ENCODE measurements at regions of chr20 and their contacts with region 1.

Region 1: GRCh38 chr20:8722276-8722928 is 346.5 kb upstream of the PLCB4 start:
- DNase-seq: peak; percentile 83
- H3K4me3 ChIP-seq: no peak overlapping the region
- H3K27ac ChIP-seq: no peak overlapping the region
- H3K4me1 ChIP-seq: no peaks in the 10 kb centered on the region
- H3K27me3 ChIP-seq: no peaks in the 10 kb centered on the region
- CTCF ChIP-seq: peak; percentile 62
- POLR2A ChIP-seq: no peak

Region 2: DNA sequence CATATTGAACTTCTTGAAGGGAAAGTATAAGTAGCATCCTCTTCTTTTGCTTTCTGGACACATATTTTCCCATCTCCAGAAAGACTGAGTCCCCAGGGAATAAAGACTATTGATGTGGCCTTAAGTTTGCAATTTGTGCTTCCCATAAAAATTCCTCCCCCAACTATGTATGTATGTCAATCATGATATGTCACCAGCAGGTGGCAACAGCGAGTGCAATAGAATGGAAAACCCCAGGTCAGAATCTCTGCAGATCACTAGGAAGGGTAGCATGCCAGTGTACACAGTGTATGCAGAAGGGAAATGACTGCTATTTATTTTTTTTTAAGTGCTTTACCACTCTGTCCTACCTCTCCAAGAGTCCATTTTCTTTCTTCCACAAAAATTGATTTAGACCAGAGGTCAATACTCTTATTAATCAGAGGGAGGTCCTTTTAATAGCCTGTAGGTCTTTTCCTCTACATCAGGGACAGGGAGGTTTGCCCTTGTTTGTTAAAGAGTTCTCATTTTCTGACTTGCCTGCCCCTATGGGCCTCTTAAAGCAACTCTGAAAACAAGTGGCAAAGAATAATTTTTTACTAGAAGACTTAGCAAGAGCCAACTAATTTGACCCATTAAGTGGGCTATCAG is 1893.5 kb before region 1 on chr20:
- CTCF ChIA-PET with region 1: no interaction called
- POLR2A ChIA-PET with region 1: no interaction called
- dilution Hi-C with region 1: no loop called
- intact Hi-C with region 1: loop called (anchors 10 kb)
- DNase-seq: peak; percentile 85
- H3K4me3 ChIP-seq: no peak overlapping the region
- H3K27ac ChIP-seq: no peak overlapping the region
- H3K4me1 ChIP-seq: no peaks in the 10 kb centered on the region
- H3K27me3 ChIP-seq: no peaks in the 10 kb centered on the region
- CTCF ChIP-seq: peak; percentile 56 to 59
- POLR2A ChIP-seq: no peak

Region 3: DNA sequence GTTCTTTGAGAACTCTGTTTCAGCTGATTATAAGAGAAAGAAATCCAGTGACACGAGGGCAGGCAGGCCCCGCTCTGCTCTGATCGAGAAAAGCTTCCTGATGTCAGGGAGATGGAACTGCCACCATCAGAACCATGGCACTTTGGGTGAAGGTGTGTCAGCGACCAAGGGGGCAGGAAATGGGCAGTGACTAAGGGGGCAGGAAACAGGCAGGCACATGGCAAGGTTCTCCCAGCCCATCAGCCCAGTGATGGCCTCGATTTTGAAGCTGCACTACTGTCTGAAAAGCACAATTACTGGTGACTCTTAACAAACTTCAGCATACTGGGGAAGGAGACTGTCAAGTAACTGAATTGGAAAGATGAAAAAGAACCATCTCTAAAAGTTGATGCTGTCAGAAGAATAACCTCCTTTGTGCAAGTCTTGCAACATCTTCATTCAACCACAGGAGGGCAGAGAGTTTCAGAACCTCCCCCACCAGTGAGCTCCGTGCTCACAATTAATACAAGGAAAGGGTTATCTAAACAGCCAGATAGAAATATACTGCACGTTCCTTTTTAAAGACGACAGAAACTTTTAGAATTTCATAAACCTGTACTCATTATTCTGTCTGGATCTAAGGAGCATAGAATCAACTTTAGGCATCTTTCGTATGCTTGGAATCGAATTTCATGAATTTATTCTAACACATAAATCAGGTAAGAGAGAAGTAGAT is 741.9 kb before region 1 on chr20:
- CTCF ChIA-PET with region 1: interaction called, 179 read pairs
- POLR2A ChIA-PET with region 1: interaction called, 3 read pairs
- dilution Hi-C with region 1: no loop called
- intact Hi-C with region 1: loop called (anchors 1 kb)
- DNase-seq: peak; percentile 58
- H3K4me3 ChIP-seq: no peak overlapping the region
- H3K27ac ChIP-seq: no peak overlapping the region
- H3K4me1 ChIP-seq: no peaks in the 10 kb centered on the region
- H3K27me3 ChIP-seq: no peaks in the 10 kb centered on the region
- CTCF ChIP-seq: peak; percentile 52 to 53
- POLR2A ChIP-seq: no peak

Region 4: DNA sequence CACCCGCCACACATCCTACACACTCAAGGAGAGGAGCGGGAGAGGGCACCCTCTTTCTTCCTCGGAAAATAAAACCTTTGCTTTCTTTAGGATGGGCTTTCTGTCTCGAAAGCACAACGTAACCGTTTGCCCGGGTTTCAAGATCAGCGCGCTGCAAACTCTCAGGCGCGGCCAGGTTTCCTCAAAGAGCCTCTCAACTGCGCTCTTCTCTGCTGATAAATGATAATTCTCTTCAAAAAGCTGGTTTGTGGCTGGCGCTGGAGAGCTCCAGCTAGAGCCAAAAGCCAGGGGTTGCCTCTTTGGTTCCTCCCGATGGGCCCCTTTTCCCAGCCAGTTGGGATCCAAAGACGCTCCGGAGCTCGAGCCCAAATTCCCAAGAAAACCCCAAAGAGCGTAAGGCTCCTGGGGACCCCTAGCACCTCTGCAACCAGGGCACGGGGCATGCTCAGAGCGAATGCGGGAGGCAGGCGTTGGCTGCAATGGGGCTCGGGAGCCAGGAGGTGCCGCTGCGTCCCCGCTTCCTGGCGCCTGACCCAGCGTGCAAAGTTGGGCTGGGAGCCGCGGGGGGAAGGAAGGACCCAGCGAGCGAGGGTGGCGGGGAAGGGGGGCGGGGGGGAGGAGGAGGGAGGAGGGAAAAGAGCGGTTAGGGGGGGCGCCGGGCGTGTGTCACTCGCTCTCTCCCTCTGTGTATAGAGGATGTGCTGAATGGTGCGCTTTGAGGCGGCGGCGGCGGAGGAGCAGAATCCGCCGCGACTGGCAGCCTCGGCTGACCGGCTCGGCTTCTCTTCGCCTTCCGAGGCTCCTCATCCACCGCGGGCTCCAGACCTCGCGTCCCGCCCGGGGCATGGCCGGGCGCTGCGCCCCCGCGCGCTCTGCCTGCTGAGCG is 590.6 kb before region 1 on chr20 and contains the start of gene PLCB1:
- CTCF ChIA-PET with region 1: interaction called, 210 read pairs
- POLR2A ChIA-PET with region 1: no interaction called
- dilution Hi-C with region 1: no loop called
- intact Hi-C with region 1: loop called (anchors 1 kb)
- DNase-seq: peak; percentile 79
- H3K4me3 ChIP-seq: peak within 1 kb of the TSS; percentile 65 to 92 (median 83)
- H3K27ac ChIP-seq: peak within 1 kb of the TSS; percentile 37
- H3K4me1 ChIP-seq: peaks cover 12% of the 10 kb centered on the region
- H3K27me3 ChIP-seq: no peaks in the 10 kb centered on the region
- CTCF ChIP-seq: peak; percentile 88 to 93
- POLR2A ChIP-seq: peak; percentile 39
- total RNA-seq, gene PLCB1: 38.6 and 53.4 TPM in 2 replicates

Region 5: DNA sequence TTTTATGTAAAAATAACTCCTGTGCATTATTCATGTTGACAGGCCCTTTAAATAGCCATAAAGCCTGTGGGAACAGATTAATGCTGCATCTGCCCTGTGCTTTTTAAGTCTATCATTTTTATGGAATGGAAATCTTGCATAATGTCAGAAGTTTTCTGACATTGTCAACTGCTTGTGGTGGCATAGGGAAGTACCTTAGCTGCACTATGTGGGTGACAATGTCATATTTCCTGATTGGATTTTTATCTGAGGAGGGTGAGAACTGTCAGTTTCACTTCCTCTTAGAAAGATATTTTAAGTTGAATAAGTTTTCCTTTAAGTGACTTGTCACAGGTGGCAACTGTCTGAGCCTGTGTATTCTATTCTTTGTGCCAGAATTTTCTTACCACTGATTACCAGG is 322.5 kb before region 1 on chr20:
- CTCF ChIA-PET with region 1: interaction called, 16 read pairs
- POLR2A ChIA-PET with region 1: no interaction called
- dilution Hi-C with region 1: no loop called
- intact Hi-C with region 1: no loop called
- DNase-seq: no peak
- H3K4me3 ChIP-seq: no peak overlapping the region
- H3K27ac ChIP-seq: no peak overlapping the region
- H3K4me1 ChIP-seq: peaks cover 3% of the 10 kb centered on the region
- H3K27me3 ChIP-seq: no peaks in the 10 kb centered on the region
- CTCF ChIP-seq: no peak
- POLR2A ChIP-seq: no peak

Region 6: GRCh38 chr20:8535403-8536261 is 186.8 kb before region 1 on chr20:
- CTCF ChIA-PET with region 1: interaction called, 46 read pairs
- POLR2A ChIA-PET with region 1: no interaction called
- dilution Hi-C with region 1: no loop called
- intact Hi-C with region 1: loop called (anchors 1 kb)
- DNase-seq: peak; percentile 29
- H3K4me3 ChIP-seq: no peak overlapping the region
- H3K27ac ChIP-seq: no peak overlapping the region
- H3K4me1 ChIP-seq: peaks cover 9% of the 10 kb centered on the region
- H3K27me3 ChIP-seq: no peaks in the 10 kb centered on the region
- CTCF ChIP-seq: peak; percentile 49 to 60
- POLR2A ChIP-seq: no peak

Region 7: DNA sequence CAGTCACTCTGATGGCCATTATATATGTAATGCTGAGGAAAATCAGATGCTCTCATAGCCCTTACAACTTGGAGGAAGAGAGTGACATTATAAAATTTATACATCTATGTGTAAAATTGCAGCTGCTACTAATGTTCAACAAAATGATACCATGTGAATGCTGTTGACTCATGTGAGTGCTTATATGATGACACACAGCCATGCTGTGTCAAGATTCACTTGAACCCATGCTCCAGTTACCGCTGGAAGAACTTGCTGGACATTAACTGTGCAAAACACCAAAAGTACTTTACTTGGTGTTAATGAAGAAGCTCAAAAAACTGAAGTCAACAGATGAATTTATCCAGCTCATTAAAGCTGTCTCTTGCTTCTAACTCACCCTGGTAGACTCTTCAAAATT is 27.6 kb after region 1 on chr20:
- CTCF ChIA-PET with region 1: interaction called, 10 read pairs
- POLR2A ChIA-PET with region 1: no interaction called
- dilution Hi-C with region 1: no loop called
- intact Hi-C with region 1: no loop called
- DNase-seq: no peak
- H3K4me3 ChIP-seq: no peak overlapping the region
- H3K27ac ChIP-seq: no peak overlapping the region
- H3K4me1 ChIP-seq: no peaks in the 10 kb centered on the region
- H3K27me3 ChIP-seq: no peaks in the 10 kb centered on the region
- CTCF ChIP-seq: no peak
- POLR2A ChIP-seq: no peak

Measured in endothelial cell of umbilical vein (primary cell).